ENCODE measurements at regions of chr4 and their contacts with region 1.

Region 1: GRCh38 chr4:89110986-89111832 is at the start of gene TIGD2:
- DNase-seq: peak; percentile 93
- H3K4me3 ChIP-seq: peak within 1 kb of the TSS; percentile 82 to 95 (median 90)
- H3K27ac ChIP-seq: peak within 1 kb of the TSS; percentile 82 to 87 (median 84)
- H3K4me1 ChIP-seq: peaks cover 0 to 20% (median 12%) of the 10 kb centered on the region in 4 donors
- H3K27me3 ChIP-seq: no peaks in the 10 kb centered on the region
- CTCF ChIP-seq: peak; percentile 77 to 83 (median 81)
- EP300 ChIP-seq: peak in 1 of 4 donors; percentile 16
- POLR2A ChIP-seq: peak in 1 of 2 donors; percentile 41
- total RNA-seq, gene TIGD2: 1.4 to 2.6 (median 1.5) TPM

Region 2: DNA sequence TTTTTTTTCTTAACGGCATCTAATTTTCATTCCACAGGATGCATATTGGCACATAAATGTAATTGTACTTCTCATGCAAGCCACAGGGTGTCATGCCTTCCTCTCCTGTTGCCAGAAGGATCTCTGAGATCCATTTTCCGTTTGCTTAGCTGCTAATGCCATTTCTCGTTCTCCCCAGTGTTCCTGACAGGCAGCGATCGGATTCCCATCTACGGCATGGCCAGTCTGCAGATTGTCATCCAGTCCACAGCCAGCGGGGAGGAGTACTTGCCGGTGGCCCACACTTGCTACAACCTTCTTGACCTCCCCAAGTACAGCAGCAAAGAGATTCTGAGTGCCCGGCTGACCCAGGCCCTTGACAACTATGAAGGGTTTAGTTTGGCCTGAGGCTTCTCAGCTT is 404.6 kb before region 1 on chr4:
- intact Hi-C with region 1: loop called (anchors 10 kb)
- DNase-seq: no peak
- H3K4me3 ChIP-seq: no peak overlapping the region
- H3K27ac ChIP-seq: peak overlapping the region; percentile 43 to 67 (median 60)
- H3K4me1 ChIP-seq: peaks cover 0 to 18% (median 14%) of the 10 kb centered on the region in 4 donors
- H3K27me3 ChIP-seq: no peaks in the 10 kb centered on the region
- CTCF ChIP-seq: peak; percentile 20 to 50 (median 38)
- EP300 ChIP-seq: no peak
- POLR2A ChIP-seq: no peak

Region 3: DNA sequence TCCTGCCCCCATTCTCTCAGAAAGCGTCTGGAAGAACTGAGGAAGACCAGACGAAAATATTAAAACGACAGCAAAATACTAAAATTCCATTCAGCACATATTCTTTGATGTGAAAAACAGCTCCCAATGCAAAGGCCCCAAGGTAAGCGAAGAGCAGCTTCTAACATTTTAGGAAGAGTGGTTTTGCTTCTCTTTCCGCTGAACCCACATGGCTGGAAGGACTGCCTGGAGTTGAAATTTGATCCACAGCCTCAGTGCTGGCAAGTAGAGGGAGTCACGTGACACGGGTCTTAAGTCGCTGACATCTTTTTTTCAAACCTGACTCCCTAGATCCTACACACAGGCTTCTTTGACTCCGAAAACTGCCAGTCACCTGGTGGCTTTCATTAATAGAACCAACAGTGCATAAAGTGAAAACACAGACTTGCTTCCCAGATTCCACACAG is 54.2 kb before region 1 on chr4 and contains the start of gene FAM13A:
- intact Hi-C with region 1: loop called (anchors 1 kb)
- DNase-seq: peak; percentile 95
- H3K4me3 ChIP-seq: peak within 1 kb of the TSS; percentile 37 to 54 (median 51)
- H3K27ac ChIP-seq: peak within 1 kb of the TSS; percentile 71 to 81 (median 74)
- H3K4me1 ChIP-seq: peaks cover 0 to 32% (median 21%) of the 10 kb centered on the region in 4 donors
- H3K27me3 ChIP-seq: no peaks in the 10 kb centered on the region
- CTCF ChIP-seq: no peak
- EP300 ChIP-seq: no peak
- POLR2A ChIP-seq: no peak
- total RNA-seq, gene FAM13A: 41.1 to 49.7 (median 47.3) TPM

Region 4: GRCh38 chr4:89254847-89255246 is 143.6 kb after region 1 on chr4:
- intact Hi-C with region 1: no loop called
- DNase-seq: no peak
- H3K4me3 ChIP-seq: no peak overlapping the region
- H3K27ac ChIP-seq: no peak overlapping the region
- H3K4me1 ChIP-seq: no peaks in the 10 kb centered on the region
- H3K27me3 ChIP-seq: no peaks in the 10 kb centered on the region
- CTCF ChIP-seq: peak in 2 of 4 experiments; percentile 30 to 46
- EP300 ChIP-seq: no peak
- POLR2A ChIP-seq: no peak